Dendritic cell treated with granulocyte-macrophage colony-stimulating factor and Interleukin-4, amounts not matched to agents 40 ng/mL and 50 ng/mL, for 4 days (primary cell): ENCODE measurements at regions of chr3 and their contacts with region 1.

Region 1: GRCh38 chr3:94573337-94573736 is 510.5 kb downstream of the NSUN3 start:
- H3K4me3 Mint-ChIP-seq: no peak overlapping the region
- H3K27ac Mint-ChIP-seq: no peak overlapping the region
- H3K4me1 Mint-ChIP-seq: no peaks in the 10 kb centered on the region
- H3K27me3 Mint-ChIP-seq: no peaks in the 10 kb centered on the region

Region 2: GRCh38 chr3:94494992-94495391 is 78.3 kb before region 1 on chr3:
- intact Hi-C with region 1: no loop called
- H3K4me3 Mint-ChIP-seq: no peak overlapping the region
- H3K27ac Mint-ChIP-seq: no peak overlapping the region
- H3K4me1 Mint-ChIP-seq: no peaks in the 10 kb centered on the region
- H3K27me3 Mint-ChIP-seq: no peaks in the 10 kb centered on the region

Region 3: DNA sequence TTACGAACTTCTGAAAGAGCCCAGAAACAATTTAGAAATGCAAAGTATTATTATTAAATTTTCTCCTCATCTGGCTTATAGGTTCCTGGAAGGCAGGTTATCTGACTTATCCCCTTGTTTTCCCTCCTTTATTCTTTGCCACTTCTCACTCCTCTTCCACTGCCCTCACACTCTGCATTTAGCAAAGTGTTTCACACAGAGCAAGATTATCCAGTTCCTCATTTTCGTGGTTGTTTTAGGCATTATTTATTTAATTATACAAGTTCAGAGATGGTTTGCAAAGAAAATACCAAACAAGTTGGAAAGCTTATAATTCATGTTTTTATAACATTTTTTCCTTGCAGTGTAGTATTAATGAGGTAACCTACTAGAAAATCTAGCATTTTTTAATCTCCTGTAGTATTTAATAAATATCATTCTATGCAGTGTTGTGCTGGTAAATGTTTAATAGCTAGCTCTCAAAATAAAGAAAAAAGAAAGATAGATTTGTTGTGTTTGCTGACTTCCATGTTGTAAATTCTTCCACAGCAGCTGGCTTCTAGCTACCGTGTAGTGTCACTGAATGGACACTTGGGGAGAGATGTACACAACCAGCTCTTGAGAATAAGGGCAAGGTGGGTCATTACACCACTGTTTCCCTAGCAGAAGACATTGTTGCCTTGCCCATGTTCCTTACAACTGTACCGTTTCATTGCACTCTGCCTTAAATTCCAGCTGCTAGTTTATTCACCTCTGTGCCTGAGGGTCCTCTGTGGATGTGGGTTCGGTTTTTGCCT is 34.6 kb after region 1 on chr3:
- intact Hi-C with region 1: loop called (anchors 5 kb)
- H3K4me3 Mint-ChIP-seq: no peak overlapping the region
- H3K27ac Mint-ChIP-seq: no peak overlapping the region
- H3K4me1 Mint-ChIP-seq: no peaks in the 10 kb centered on the region
- H3K27me3 Mint-ChIP-seq: no peaks in the 10 kb centered on the region

Region 4: DNA sequence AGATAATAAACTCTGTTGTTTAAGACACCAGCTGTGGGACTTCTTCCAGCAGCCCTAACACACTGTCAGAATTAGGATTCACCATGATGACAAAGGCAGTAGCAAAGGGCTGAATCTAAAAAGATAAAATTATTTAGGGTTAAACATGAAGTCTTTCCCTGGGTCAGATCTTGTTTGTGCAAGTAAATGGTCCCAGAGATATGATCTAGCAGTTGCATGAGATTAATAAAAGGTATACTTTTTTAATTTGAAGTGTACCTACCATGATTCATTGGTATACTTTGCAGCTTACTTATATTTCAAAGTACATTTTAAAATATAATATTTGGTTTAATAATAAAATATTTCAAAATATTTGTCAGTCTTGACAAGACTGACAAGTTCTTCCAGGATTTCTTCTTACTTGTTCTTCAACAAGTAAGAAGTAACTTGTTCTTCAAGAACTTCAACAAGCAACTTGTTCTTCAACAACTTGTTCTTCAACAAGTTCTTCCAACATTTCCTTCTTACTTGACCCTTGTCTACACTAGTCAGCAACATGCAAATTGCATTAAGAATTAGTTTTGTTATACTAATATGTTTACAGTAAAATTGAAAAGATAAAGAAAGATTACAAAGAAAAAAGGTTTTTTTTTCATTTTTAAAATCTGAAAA is 221.1 kb after region 1 on chr3:
- intact Hi-C with region 1: no loop called
- H3K4me3 Mint-ChIP-seq: no peak overlapping the region
- H3K27ac Mint-ChIP-seq: no peak overlapping the region
- H3K4me1 Mint-ChIP-seq: no peaks in the 10 kb centered on the region
- H3K27me3 Mint-ChIP-seq: no peaks in the 10 kb centered on the region